Prostate gland (tissue), 2 donors: ENCODE measurements at regions of chr11 and their contacts with region 1.

Region 1: DNA sequence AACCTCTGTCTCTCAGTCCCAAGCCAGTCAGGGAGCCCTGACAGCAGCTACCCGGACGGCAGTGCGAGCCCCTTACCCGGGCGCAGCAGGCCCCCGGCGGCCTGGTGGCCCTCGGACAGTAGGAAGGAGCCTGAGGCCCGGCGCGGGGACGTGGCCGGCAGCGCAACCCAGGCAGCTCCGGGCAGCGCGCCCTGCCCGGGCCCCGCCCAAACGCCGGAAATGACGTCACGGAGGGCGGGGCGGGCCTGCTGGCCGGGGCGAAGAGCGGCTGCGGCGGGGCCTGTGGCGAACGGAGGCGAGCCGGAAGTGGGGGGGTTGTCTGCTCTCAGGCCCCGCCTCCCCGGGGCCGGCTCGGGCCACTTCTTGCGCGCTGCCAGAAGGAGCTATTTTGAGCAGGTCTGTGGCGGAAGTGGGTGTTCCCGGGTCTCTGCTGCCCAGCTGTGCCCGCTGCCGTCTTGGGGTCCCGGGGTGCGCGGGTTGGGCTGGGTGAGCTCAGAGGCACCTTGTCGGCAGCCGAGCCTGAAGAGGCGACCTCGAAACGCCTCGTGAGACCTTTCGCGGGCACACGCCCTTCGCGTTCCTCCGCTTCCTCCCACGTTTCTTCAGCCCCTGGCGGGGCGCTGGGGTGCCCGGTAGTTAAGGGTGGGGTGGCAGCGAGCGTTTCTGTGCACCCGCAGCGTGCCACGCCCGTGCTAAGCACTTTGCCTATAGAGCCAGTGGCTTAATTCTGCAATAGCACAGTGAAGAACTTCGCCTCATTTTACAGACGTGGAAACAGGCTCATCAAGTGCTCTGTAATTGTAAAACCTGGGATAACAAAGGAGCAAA is at the start of gene C11orf24:
- DNase-seq: peak; percentile 95
- H3K4me3 ChIP-seq: peak within 1 kb of the TSS; percentile 69 to 79
- H3K27ac ChIP-seq: peak within 1 kb of the TSS; percentile 93
- H3K4me1 ChIP-seq: no peaks in the 10 kb centered on the region
- H3K27me3 ChIP-seq: no peaks in the 10 kb centered on the region
- CTCF ChIP-seq: peak in 2 of 4 experiments; percentile 2 to 15
- POLR2A ChIP-seq: peak; percentile 81
- total RNA-seq, gene C11orf24: 25.1 to 61.0 TPM

Region 2: DNA sequence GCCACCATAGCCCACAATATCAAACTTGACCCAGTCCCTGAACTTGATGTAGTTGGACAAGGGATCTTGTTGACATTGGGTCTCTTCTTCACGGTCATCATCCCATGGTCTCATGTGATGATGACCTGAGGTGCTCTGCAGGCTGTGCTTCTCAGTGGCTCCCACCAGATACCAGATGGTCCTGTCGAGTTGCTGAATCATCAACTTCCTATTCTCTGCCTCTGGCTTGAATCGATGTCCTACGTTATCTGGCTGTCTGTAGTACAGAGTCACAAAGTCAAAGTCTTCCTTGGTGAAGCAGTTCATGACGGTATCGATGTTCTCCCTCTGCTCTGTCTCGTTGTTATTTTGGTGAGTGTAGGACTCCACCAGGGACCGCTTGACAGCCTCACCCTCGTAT is 451.9 kb before region 1 on chr11:
- intact Hi-C with region 1: no loop called
- DNase-seq: no peak
- H3K4me3 ChIP-seq: no peak overlapping the region
- H3K27ac ChIP-seq: no peak overlapping the region
- H3K4me1 ChIP-seq: no peaks in the 10 kb centered on the region
- H3K27me3 ChIP-seq: no peaks in the 10 kb centered on the region
- CTCF ChIP-seq: no peak
- POLR2A ChIP-seq: no peak

Region 3: GRCh38 chr11:68191661-68192579 is 80.1 kb before region 1 on chr11:
- intact Hi-C with region 1: no loop called
- DNase-seq: no peak
- H3K4me3 ChIP-seq: no peak overlapping the region
- H3K27ac ChIP-seq: no peak overlapping the region
- H3K4me1 ChIP-seq: no peaks in the 10 kb centered on the region
- H3K27me3 ChIP-seq: no peaks in the 10 kb centered on the region
- CTCF ChIP-seq: no peak
- POLR2A ChIP-seq: no peak

Region 4: DNA sequence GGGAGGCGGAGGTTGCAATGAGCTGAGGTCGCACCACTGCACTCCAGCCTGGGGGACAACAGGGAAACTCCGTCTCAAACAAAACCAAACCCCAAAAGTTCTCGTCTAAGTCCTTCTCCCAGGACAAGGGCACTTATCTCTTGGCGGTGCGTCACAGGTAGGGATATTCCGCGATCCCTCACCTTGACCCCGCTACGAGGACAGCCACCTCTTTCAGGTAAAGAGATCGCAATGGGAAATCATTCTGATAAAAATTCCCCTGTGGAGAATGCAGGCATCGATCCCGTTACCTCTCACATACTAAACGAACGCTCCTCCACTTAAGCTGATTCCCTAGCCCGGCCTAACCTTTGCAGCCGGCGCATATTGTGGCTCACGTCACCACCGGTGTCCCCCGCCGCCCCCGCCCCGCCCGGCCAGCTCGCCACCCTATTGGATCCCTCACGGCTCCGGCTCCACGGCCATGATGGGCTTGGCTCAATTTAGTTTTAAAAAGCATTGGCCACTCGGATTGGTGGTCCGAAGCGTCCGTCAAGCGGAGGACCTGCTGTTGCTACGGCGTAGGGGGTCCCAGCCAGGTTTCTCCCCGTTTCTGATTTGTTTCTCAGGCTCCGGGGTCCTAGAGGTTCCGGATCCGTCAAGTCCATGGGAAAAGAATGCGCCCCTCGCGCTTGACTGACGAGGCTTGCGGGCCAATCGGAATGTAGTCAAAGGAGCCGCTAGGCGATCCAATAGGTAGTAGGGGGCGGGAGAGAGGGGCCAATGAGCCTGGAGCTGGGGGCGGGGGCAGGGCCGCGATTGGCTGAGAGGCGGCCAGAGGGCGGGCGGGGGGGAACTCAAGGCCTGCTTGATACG is 188.1 kb after region 1 on chr11:
- intact Hi-C with region 1: loop called (anchors 5 kb)
- DNase-seq: peak; percentile 98
- H3K4me3 ChIP-seq: peak overlapping the region; percentile 96 to 97
- H3K27ac ChIP-seq: peak overlapping the region; percentile 98 to 99
- H3K4me1 ChIP-seq: no peaks in the 10 kb centered on the region
- H3K27me3 ChIP-seq: no peaks in the 10 kb centered on the region
- CTCF ChIP-seq: peak in 1 of 4 experiments; percentile 38
- POLR2A ChIP-seq: no peak